MCF 10A (cell line): ENCODE measurements at regions of chr1 and their contacts with region 1.

Region 1: DNA sequence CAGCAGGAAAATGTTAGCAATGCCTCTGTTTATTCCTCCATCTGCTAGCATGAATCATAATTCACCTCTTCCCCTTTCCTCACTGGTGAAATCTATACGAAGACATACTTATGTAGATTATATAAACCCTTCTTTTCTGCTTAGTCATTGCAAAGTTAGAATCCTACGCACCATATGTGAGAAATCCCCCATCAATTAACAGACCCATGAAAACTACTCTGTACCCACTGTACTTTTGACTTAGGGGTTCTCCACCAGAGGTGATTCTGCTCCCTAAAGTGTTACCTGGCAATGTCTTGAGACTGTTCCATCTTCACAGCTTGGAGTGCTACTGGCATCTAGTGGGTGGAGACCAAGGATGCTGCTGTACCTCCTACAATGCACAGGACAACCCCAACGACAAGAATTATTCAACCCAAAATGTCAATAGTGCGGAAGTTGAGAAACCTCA is 49.6 kb upstream of the KCTD3 start:
- DNase-seq: peak; percentile 79
- H3K4me3 Mint-ChIP-seq: no peak overlapping the region
- H3K27ac Mint-ChIP-seq: peak overlapping the region; percentile 65
- H3K4me1 Mint-ChIP-seq: peaks cover 12% of the 10 kb centered on the region
- H3K27me3 Mint-ChIP-seq: no peaks in the 10 kb centered on the region
- CTCF ChIP-seq: peak; percentile 87

Region 2: DNA sequence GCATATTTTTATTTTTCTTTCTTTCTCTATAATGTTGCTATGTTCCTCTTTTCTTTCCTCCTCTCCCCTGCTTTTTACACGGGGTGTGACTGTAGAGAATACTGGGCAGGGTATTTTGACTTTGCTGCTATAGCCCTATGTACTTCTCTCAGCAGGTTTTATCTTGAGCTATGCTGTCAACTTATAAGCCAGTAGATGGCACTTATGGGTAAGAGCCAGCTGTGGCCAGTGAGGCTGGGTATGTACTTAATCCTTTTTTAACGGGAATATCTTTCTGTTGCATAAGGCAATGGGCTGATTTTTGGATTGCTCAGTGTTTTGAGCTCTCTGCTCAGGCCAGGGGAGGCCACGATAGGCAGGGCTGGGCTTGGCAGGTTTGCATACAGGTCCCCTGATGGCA is 335.9 kb before region 1 on chr1:
- CTCF ChIA-PET with region 1: interaction called, 3 read pairs
- POLR2A ChIA-PET with region 1: interaction called, 4 read pairs
- intact Hi-C with region 1: loop called (anchors 10 kb)
- DNase-seq: peak; percentile 43
- H3K4me3 Mint-ChIP-seq: no peak overlapping the region
- H3K27ac Mint-ChIP-seq: no peak overlapping the region
- H3K4me1 Mint-ChIP-seq: peaks cover 8% of the 10 kb centered on the region
- H3K27me3 Mint-ChIP-seq: no peaks in the 10 kb centered on the region
- CTCF ChIP-seq: no peak

Region 3: DNA sequence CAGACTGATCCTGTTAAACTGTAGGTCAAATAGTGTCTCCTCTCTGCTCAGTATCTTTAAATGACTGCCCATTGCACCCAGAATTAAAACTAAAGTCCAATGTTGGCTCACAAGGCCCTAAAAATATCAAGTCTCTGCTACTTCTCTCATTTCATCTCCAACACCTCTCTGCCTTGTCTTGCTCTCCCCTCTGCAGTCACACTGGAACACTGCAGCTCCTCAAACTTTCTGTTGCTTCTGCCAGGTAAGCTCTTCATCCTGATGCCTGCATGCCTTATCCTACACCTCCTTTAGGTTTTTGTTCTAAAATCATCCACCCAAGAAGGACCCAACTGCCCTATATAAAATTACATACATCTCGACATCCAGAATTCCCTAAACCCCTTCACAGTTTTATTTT is 177.4 kb before region 1 on chr1:
- CTCF ChIA-PET with region 1: no interaction called
- POLR2A ChIA-PET with region 1: no interaction called
- intact Hi-C with region 1: no loop called
- DNase-seq: peak; percentile 14
- H3K4me3 Mint-ChIP-seq: no peak overlapping the region
- H3K27ac Mint-ChIP-seq: no peak overlapping the region
- H3K4me1 Mint-ChIP-seq: no peaks in the 10 kb centered on the region
- H3K27me3 Mint-ChIP-seq: no peaks in the 10 kb centered on the region
- CTCF ChIP-seq: no peak

Region 4: GRCh38 chr1:215507119-215507518 is 10.3 kb before region 1 on chr1:
- CTCF ChIA-PET with region 1: interaction called, 12 read pairs
- POLR2A ChIA-PET with region 1: interaction called, 3 read pairs
- intact Hi-C with region 1: no loop called
- DNase-seq: no peak
- H3K4me3 Mint-ChIP-seq: no peak overlapping the region
- H3K27ac Mint-ChIP-seq: no peak overlapping the region
- H3K4me1 Mint-ChIP-seq: peaks cover 4% of the 10 kb centered on the region
- H3K27me3 Mint-ChIP-seq: no peaks in the 10 kb centered on the region
- CTCF ChIP-seq: no peak

Region 5: GRCh38 chr1:215547011-215547410 is 29.5 kb after region 1 on chr1:
- CTCF ChIA-PET with region 1: no interaction called
- POLR2A ChIA-PET with region 1: no interaction called
- intact Hi-C with region 1: no loop called
- DNase-seq: no peak
- H3K4me3 Mint-ChIP-seq: no peak overlapping the region
- H3K27ac Mint-ChIP-seq: no peak overlapping the region
- H3K4me1 Mint-ChIP-seq: peaks cover 11% of the 10 kb centered on the region
- H3K27me3 Mint-ChIP-seq: no peaks in the 10 kb centered on the region
- CTCF ChIP-seq: no peak